ENCODE measurements at regions of chr2 and their contacts with region 1.

Region 1: DNA sequence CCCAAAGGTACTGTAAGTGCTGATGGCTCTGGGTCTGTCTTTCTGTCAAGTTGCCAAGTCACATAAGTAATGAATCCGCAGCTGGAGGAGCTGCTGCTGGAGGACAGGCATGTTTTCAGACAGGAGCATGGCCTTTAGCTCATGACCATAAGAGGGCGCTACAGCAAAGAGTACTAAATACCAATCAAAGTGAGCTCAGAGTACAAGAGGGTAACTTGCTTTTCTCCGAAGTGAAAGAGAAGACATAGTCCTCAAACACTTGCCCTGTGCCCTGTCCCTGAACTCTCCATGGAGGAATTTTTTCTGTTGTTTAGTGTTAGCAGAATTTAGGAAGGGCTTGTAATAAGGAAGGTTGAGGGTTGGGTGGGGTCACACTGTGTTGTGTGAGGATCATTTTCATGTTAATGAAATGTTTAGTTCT is 58.0 kb upstream of the EML6 start:
- DNase-seq: no peak
- ATAC-seq: peak in 1 of 2 donors; percentile 44
- H3K4me3 ChIP-seq: no peak overlapping the region
- H3K27ac ChIP-seq: peak overlapping the region; percentile 67 to 73 (median 71)
- H3K4me1 ChIP-seq: peaks cover 36 to 44% of the 10 kb centered on the region in 2 donors
- H3K27me3 ChIP-seq: no peaks in the 10 kb centered on the region
- CTCF ChIP-seq: peak in 4 of 5 experiments; percentile 38 to 65 (median 54)
- POLR2A ChIP-seq: no peak

Region 2: DNA sequence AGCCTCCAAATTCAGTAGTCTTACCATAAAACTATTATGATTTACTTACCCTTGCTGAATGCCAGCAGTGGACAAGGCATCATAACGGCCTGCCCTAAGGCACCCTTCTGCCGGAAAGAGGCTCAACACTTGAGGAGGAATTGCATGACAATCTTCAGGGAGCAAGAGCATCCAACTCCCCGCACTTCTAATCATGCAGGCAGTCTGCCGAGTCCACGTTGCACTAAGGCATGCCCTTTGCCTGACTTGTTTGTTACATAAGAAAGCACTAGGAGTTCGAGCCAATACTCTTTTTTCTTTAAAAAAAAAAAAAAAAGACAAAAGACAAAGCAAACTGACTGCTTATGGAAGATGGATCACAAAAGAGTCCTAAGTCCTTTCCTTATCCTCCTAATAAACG is 227.2 kb before region 1 on chr2:
- in situ Hi-C with region 1: no loop called
- intact Hi-C with region 1: no loop called
- DNase-seq: peak in 1 of 2 donors; percentile 17
- ATAC-seq: peak; percentile 25 to 51
- H3K4me3 ChIP-seq: no peak overlapping the region
- H3K27ac ChIP-seq: peak overlapping the region in 1 of 4 donors; percentile 4
- H3K4me1 ChIP-seq: peaks cover 20 to 70% of the 10 kb centered on the region in 2 donors
- H3K27me3 ChIP-seq: no peaks in the 10 kb centered on the region
- CTCF ChIP-seq: no peak
- POLR2A ChIP-seq: no peak

Region 3: DNA sequence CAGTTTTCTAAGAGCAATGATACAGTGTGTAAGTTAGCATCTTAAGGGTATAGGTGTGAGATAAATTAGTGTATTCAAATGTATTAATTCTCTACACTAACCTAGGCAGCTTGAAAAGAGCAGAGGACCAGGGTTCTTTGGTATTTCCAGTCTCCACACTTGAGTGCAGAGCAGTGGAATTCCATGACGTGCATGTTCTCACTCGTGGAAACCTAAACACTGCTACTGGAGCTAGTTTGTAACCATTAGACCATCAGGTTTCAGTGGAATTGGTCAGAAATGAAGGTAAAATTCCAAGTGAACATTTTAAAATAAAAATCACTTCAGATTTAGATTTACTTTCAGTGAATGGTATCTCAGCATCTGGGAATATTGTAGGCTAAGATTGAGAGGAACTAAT is 200.3 kb before region 1 on chr2:
- in situ Hi-C with region 1: no loop called
- intact Hi-C with region 1: loop called (anchors 2 kb)
- DNase-seq: no peak
- ATAC-seq: no peak
- H3K4me3 ChIP-seq: no peak overlapping the region
- H3K27ac ChIP-seq: peak overlapping the region; percentile 28 to 90 (median 74)
- H3K4me1 ChIP-seq: peaks cover 41 to 90% of the 10 kb centered on the region in 2 donors
- H3K27me3 ChIP-seq: no peaks in the 10 kb centered on the region
- CTCF ChIP-seq: no peak
- POLR2A ChIP-seq: no peak

Region 4: DNA sequence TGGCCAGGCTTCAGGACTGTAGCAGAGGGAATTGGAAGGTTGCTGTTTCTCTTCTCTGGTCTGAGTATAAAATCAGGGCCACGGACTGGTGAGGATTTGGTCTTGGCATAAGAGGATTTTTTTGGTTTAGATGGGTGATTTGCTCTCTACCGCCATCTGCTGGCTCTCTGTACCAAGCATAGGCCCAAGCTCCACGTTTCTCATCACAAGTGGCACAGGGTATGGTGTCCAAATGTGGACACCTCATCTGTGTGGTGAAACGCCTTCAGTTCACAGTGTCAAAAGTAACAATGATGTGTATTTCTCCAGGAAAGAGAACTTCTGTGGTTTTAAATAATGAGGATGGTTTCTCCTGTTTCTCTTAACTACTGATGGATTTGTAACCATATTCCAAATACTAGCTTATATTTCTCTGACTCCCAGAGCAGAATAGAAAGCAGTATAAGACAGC is 173.2 kb after region 1 on chr2:
- in situ Hi-C with region 1: loop called in 1 of 4 experiments (anchors 25 kb)
- intact Hi-C with region 1: loop called (anchors 1 kb)
- DNase-seq: peak; percentile 15 to 41
- ATAC-seq: peak; percentile 66 to 90
- H3K4me3 ChIP-seq: no peak overlapping the region
- H3K27ac ChIP-seq: no peak overlapping the region
- H3K4me1 ChIP-seq: no peaks in the 10 kb centered on the region
- H3K27me3 ChIP-seq: no peaks in the 10 kb centered on the region
- CTCF ChIP-seq: peak; percentile 64 to 90 (median 79)
- POLR2A ChIP-seq: no peak